ENCODE measurements at regions of chr12 and their contacts with region 1.

Region 1: GRCh38 chr12:63802012-63802608 is 22.4 kb downstream of the RXYLT1 start:
- DNase-seq: no peak
- ATAC-seq: no peak
- H3K4me3 Mint-ChIP-seq: no peak overlapping the region
- H3K27ac Mint-ChIP-seq: no peak overlapping the region
- H3K4me1 Mint-ChIP-seq: no peaks in the 10 kb centered on the region
- H3K27me3 Mint-ChIP-seq: no peaks in the 10 kb centered on the region

Region 2: GRCh38 chr12:63103494-63104131 is 698.5 kb before region 1 on chr12:
- CTCF ChIA-PET with region 1: no interaction called
- POLR2A ChIA-PET with region 1: no interaction called
- intact Hi-C with region 1: loop called (anchors 2 to 10 kb)
- DNase-seq: peak; percentile 25
- ATAC-seq: no peak
- H3K4me3 Mint-ChIP-seq: no peak overlapping the region
- H3K27ac Mint-ChIP-seq: no peak overlapping the region
- H3K4me1 Mint-ChIP-seq: no peaks in the 10 kb centered on the region
- H3K27me3 Mint-ChIP-seq: peaks cover 4% of the 10 kb centered on the region

Region 3: DNA sequence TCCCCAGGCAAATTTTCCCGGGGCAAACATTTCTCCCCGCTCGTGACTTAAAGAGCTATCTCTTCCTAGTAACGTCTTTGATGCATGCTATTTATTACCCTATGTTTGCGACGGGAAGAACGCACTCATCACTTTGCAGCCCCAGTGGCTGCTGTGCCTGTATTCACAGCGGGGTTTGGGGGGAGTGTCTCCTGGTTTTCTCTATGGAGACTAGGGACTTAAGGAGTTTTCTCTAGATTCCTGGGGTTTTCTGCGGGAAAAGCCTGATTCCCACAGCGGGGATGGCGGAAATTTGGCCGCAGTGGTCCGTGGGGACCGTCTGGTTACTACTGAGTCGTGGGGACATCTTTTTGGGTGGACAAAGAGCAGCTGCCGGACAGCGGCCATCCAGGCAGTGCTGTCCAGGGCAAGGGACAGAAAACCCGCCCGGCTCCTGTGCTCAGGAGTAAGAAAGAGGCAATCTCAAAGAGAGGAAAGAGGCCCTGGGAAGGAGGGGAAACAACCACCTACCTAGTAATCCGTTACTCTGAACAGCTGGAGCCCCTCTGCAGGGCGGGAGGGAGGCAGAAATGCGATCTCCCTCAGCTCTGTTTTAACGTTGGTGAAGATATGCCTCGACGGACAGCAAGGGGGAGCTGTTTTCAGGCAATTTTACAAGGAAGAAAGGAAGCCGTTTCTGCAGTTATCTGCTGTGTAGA is 650.3 kb before region 1 on chr12:
- CTCF ChIA-PET with region 1: no interaction called
- POLR2A ChIA-PET with region 1: no interaction called
- intact Hi-C with region 1: loop called in 1 of 2 experiments (anchors 5 kb)
- DNase-seq: peak; percentile 52
- ATAC-seq: peak; percentile 65
- H3K4me3 Mint-ChIP-seq: peak overlapping the region; percentile 12
- H3K27ac Mint-ChIP-seq: no peak overlapping the region
- H3K4me1 Mint-ChIP-seq: peaks cover 19% of the 10 kb centered on the region
- H3K27me3 Mint-ChIP-seq: peaks cover 53% of the 10 kb centered on the region

Region 4: GRCh38 chr12:63420206-63420644 is 381.9 kb before region 1 on chr12:
- CTCF ChIA-PET with region 1: no interaction called
- POLR2A ChIA-PET with region 1: no interaction called
- intact Hi-C with region 1: loop called in 1 of 2 experiments (anchors 1 kb)
- DNase-seq: peak; percentile 67
- ATAC-seq: peak; percentile 49
- H3K4me3 Mint-ChIP-seq: no peak overlapping the region
- H3K27ac Mint-ChIP-seq: no peak overlapping the region
- H3K4me1 Mint-ChIP-seq: no peaks in the 10 kb centered on the region
- H3K27me3 Mint-ChIP-seq: peaks cover 1% of the 10 kb centered on the region

Region 5: DNA sequence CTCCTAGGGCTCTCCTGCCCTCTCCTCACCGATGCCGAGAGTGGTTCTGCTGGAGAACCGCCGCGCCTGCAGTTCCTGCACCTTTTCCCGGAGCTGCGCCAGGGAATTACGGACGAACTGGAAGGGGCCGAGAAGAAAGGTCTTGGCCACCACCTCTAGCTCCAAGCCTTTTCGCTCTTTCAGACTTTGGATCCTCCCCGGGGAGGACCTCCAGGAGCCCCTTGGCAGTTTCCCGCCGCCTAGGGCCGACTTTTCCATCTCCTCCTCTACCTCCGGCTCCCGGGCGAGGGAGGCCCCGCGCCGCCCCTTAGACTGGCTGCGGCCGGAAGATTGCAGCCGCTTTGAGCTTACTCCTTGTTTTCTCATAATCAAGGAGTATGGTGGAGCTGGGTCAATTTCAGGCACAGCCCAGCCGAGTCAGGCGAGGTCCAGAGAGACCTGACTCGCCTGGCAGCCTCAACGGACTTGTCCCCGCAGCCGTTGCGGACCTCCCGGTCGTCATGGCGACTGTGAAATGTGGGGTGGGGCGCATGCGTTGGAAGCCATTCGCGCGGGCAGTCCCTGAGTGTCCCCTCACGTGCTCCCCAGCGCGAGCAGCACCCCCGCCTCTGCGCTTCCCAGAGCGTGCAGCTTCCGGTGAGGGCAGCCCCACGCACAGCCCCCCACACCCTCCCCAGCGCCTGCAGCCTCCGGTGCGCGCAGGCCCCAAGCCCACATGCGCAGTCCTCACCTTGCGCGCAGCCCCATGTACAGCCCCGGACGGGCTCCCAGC is 133.9 kb before region 1 on chr12 and contains the start of gene DPY19L2:
- CTCF ChIA-PET with region 1: interaction called, 3 read pairs
- POLR2A ChIA-PET with region 1: no interaction called
- intact Hi-C with region 1: loop called (anchors 1 to 5 kb)
- DNase-seq: peak; percentile 50
- ATAC-seq: peak; percentile 80
- H3K4me3 Mint-ChIP-seq: peak within 1 kb of the TSS; percentile 67
- H3K27ac Mint-ChIP-seq: no peak within 1 kb of the TSS
- H3K4me1 Mint-ChIP-seq: peaks cover 9% of the 10 kb centered on the region
- H3K27me3 Mint-ChIP-seq: peaks cover 32% of the 10 kb centered on the region
- total RNA-seq, gene DPY19L2: 0.21 to 0.70 TPM

Measured in activated CD4-positive, alpha-beta T cell treated with anti-CD3 and anti-CD28 coated beads for 36 hours (primary cell).